Caco-2 (cell line): ENCODE measurements at regions of chr4 and their contacts with region 1.

Region 1: DNA sequence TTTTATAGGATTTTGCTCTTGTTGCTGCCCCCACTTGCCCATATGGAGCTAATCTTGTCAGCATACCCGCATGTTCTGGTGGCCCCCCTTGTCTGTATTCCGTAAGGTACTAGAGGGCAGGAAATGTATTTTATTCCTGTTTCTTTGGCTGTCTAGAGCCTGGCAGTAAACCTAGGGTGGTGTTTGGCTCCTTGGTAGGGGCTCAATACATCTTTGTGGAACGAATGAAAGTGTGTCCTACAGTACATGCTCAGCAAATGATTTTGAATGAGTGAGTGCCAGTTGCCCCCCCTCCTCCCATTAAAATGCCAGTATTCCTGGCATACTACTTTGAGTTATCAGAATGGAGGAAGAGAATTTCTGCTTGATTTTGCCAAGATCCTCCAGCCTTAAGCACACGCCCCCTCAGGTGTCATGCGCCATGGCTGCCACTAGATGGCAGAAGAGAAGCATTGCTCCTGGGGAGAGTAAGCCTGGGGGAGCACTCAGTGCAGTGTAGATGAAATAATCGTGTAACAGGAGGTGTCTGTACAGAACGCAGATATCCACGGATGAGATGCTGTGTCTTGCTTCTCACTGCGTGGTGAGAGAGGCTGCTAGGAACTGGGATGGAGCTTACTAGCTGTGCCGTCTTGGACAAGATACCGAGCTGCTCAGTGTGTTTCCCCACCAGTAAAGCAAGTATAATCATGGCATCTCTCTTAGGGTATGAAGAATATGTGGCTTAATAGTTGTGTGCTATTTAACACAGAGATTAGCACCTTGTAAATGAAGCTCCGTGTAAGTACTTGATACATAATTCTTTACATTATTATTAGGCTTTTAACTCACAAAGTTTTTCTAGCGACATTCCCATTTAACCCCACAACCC is 17.2 kb upstream of the RNF212 start:
- DNase-seq: peak; percentile 64 to 76
- H3K4me3 ChIP-seq: no peak overlapping the region
- H3K4me3 Mint-ChIP-seq: no peak overlapping the region
- H3K27ac Mint-ChIP-seq: no peak overlapping the region
- H3K4me1 ChIP-seq: no peaks in the 10 kb centered on the region
- H3K4me1 Mint-ChIP-seq: no peaks in the 10 kb centered on the region
- H3K27me3 ChIP-seq: no peaks in the 10 kb centered on the region
- H3K27me3 Mint-ChIP-seq: peaks cover 8% of the 10 kb centered on the region
- CTCF ChIP-seq: peak; percentile 96

Region 2: GRCh38 chr4:1266881-1267763 is 136.6 kb after region 1 on chr4:
- CTCF ChIA-PET with region 1: interaction called, 5 read pairs
- POLR2A ChIA-PET with region 1: no interaction called
- intact Hi-C with region 1: loop called (anchors 1 kb)
- DNase-seq: no peak
- H3K4me3 ChIP-seq: no peak overlapping the region
- H3K4me3 Mint-ChIP-seq: no peak overlapping the region
- H3K27ac Mint-ChIP-seq: no peak overlapping the region
- H3K4me1 ChIP-seq: no peaks in the 10 kb centered on the region
- H3K4me1 Mint-ChIP-seq: no peaks in the 10 kb centered on the region
- H3K27me3 ChIP-seq: no peaks in the 10 kb centered on the region
- H3K27me3 Mint-ChIP-seq: no peaks in the 10 kb centered on the region
- CTCF ChIP-seq: no peak

Region 3: DNA sequence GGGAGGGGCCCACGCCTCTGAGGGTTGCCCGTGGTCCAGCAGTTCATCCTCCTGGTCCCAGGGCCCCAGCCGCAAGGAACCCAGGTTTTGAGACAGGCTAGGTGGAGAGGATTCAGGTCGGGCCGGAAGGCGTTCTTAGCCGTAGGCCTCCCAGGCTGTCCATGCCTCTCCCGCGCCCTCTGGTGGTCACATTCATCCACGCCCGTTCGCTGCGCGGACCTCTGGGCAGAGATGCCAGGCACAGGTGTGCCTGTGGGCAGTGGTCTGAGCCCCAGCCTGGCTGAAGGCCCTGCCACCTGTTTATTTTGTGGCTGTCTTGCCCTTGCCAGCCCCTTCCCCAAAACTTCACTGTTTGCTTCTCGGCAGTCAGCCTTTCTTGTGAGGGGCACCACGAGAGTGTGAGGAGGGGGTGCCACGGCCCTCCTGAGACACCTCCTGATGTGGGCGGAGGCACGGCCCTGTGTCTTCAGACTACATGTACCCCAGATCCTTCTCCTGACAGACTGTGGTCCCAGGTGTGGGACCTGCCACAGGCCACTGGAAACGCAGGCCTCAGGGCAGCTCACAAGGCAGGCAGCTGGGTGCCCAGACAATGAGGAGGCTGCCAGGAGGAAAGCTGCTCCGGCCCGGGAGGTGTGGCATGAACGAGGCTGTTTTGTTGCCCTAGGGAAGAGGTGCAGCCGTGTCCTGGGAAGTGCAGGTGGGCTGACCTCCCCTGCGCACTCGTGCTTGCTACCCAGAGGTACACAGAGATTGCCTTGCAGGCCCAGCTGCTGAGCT is 221.5 kb after region 1 on chr4:
- CTCF ChIA-PET with region 1: interaction called, 5 read pairs
- POLR2A ChIA-PET with region 1: no interaction called
- intact Hi-C with region 1: loop called (anchors 2 kb)
- DNase-seq: peak; percentile 78 to 87
- H3K4me3 ChIP-seq: no peak overlapping the region
- H3K4me3 Mint-ChIP-seq: no peak overlapping the region
- H3K27ac Mint-ChIP-seq: no peak overlapping the region
- H3K4me1 ChIP-seq: 0 out of 2 replicates have a peak, but pooled peaks cover 10% of the 10 kb centered on the region
- H3K4me1 Mint-ChIP-seq: peaks cover 10% of the 10 kb centered on the region
- H3K27me3 ChIP-seq: no peaks in the 10 kb centered on the region
- H3K27me3 Mint-ChIP-seq: no peaks in the 10 kb centered on the region
- CTCF ChIP-seq: peak; percentile 80 to 88